ENCODE measurements at regions of chr9 and their contacts with region 1.

Region 1: DNA sequence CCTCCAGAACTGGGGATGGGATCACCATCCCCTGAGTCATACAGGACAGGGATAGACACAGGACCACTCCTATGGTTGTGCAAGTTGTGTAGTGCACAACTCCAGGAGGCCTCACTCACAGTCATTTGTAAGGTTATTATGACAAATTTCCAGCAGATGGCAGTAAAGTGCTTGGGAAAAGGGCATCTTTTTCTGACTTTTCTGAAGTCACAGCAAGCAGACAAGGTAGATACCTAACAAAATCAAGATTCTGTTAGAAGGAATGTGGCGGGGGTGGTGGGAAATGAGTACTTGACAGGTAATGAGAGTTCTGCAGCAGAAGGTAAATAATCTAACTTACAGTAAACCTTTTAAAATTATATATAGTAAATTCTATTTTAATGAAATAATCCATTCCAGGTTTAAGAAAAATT is 16.7 kb upstream of the KIF27 start:
- DNase-seq: no peak
- ATAC-seq: peak; percentile 45 to 48
- H3K4me3 ChIP-seq: no peak overlapping the region
- H3K27ac ChIP-seq: no peak overlapping the region
- H3K4me1 ChIP-seq: peaks cover 20 to 29% of the 10 kb centered on the region in 2 donors
- H3K27me3 ChIP-seq: no peaks in the 10 kb centered on the region
- CTCF ChIP-seq: peak; percentile 59 to 71 (median 68)
- POLR2A ChIP-seq: no peak

Region 2: DNA sequence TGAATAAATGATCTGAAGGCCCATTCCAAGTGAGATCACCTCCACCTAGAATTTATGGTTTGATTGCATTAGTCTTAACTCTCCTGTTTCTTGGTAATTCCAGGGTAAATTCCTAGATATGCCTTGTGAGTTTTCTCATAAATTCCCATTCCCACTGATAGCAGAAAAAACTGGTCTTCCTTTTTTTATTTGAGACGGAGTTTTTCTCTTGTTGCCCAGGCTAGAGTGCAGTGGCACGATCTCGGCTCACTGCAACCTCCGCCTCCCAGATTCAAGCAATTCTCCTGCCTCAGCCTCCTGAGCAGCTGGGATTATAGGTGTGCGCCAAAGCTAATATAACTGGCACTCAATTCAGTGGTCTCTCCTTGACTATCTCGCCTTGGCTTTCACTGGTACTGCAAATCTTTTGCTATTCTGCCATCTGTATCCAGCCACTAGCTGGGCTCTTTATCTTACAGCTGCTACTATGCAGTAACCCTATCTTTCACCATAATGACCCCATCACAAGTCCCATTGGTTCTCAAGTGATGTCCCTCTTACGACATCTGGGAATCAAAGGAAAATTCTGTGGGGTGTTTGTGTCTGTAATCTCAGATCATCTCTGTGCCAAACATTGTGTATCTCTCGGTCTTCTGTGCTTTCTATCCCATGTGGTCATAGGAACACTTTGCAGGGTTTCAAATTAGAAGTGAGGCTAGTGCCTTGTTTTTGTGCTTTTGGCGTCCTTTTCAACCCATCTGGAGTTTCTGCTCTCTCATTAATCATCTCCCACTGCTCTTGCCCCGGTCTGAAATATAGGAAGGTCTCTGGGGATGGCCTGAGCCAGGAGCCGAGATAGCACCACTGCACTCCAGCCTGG is 27.7 kb after region 1 on chr9:
- in situ Hi-C with region 1: no loop called
- intact Hi-C with region 1: no loop called
- DNase-seq: no peak
- ATAC-seq: peak; percentile 20 to 42
- H3K4me3 ChIP-seq: no peak overlapping the region
- H3K27ac ChIP-seq: peak overlapping the region in 2 of 4 donors; percentile 5 to 12
- H3K4me1 ChIP-seq: peaks cover 0 to 4% of the 10 kb centered on the region in 2 donors
- H3K27me3 ChIP-seq: no peaks in the 10 kb centered on the region
- CTCF ChIP-seq: no peak
- POLR2A ChIP-seq: no peak

Region 3: DNA sequence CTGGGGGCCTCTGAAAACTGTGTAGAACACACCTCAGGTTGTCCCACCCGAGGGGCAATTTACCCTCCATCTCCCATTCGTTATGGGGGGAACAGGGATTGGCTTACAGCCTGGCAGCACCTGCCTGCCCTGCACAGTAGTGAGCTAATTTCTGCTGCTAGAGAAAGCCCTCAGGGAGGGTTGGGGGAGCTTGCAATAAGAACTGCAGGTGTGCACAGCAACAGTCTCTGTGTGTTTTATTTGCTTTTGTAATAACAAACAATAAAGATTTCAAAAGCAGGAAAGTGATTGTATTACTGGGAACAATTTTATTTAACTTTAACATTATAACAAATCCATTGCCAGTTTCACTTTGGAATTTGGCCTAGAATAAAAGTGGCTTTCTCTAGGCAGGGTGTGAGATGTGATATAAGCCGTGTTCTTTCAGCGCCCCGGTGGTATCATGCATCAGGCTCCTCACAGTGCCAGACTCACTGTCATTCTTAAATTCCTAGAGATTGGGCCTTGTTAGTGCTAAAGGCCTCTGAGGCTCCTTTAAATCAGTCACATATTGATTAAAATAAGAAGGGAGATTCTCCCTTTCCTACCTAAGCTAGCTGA is 123.8 kb after region 1 on chr9:
- in situ Hi-C with region 1: no loop called
- intact Hi-C with region 1: loop called (anchors 10 kb)
- DNase-seq: no peak
- ATAC-seq: no peak
- H3K4me3 ChIP-seq: no peak overlapping the region
- H3K27ac ChIP-seq: peak overlapping the region; percentile 41 to 69 (median 61)
- H3K4me1 ChIP-seq: peaks cover 28 to 34% of the 10 kb centered on the region in 2 donors
- H3K27me3 ChIP-seq: no peaks in the 10 kb centered on the region
- CTCF ChIP-seq: no peak
- POLR2A ChIP-seq: no peak

Region 4: GRCh38 chr9:84170521-84171141 is 232.7 kb after region 1 on chr9:
- in situ Hi-C with region 1: loop called (anchors 5 to 10 kb)
- intact Hi-C with region 1: loop called (anchors 1 kb)
- DNase-seq: peak; percentile 82 to 90
- ATAC-seq: peak; percentile 77 to 78
- H3K4me3 ChIP-seq: no peak overlapping the region
- H3K27ac ChIP-seq: peak overlapping the region; percentile 65 to 75 (median 68)
- H3K4me1 ChIP-seq: peaks cover 18 to 20% of the 10 kb centered on the region in 2 donors
- H3K27me3 ChIP-seq: no peaks in the 10 kb centered on the region
- CTCF ChIP-seq: peak in 2 of 5 experiments; percentile 7 to 25
- POLR2A ChIP-seq: no peak

Region 5: DNA sequence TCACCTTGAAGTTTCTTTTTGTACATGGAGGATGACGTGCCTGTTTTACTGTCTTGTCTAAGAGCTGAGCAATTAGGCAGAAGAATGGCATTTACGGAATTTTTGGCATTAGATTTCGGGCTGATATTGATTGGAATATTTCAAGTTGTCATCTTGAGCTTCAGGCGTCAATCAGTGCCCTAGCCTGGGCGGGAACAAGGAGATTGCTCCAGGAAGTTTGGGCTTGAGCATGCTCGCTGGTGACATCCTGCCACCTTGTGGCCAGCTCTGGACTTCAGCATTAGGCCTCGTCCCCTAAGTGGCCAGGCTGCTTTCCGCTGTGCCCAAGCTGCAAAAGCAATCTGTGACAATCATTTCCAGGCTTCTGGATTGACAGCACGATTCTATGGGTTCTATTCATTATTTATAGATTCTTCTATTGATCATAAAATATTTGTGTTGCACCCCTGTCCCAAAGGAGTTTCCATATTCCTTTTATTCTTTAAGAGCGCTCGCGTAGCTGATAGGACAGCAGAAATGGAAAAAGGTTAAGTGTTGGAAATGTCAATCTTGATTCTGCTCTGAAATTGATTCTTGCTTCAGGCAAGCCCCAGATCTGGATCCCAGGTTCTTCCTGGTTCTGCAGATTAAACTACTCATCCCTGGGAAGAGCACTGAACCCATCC is 323.3 kb after region 1 on chr9:
- in situ Hi-C with region 1: loop called (anchors 5 kb)
- intact Hi-C with region 1: loop called (anchors 1 kb)
- DNase-seq: peak; percentile 59 to 70
- ATAC-seq: peak; percentile 92 to 97
- H3K4me3 ChIP-seq: peak overlapping the region; percentile 11 to 45 (median 26)
- H3K27ac ChIP-seq: no peak overlapping the region
- H3K4me1 ChIP-seq: no peaks in the 10 kb centered on the region
- H3K27me3 ChIP-seq: no peaks in the 10 kb centered on the region
- CTCF ChIP-seq: peak; percentile 83 to 95 (median 86)
- POLR2A ChIP-seq: no peak

Region 6: GRCh38 chr9:84315278-84315877 is 377.5 kb after region 1 on chr9:
- in situ Hi-C with region 1: loop called in 2 of 4 experiments (anchors 5 to 10 kb)
- intact Hi-C with region 1: loop called (anchors 2 kb)
- DNase-seq: peak in 1 of 2 donors; percentile 19
- ATAC-seq: peak in 1 of 2 donors; percentile 53
- H3K4me3 ChIP-seq: no peak overlapping the region
- H3K27ac ChIP-seq: no peak overlapping the region
- H3K4me1 ChIP-seq: peaks cover 0 to 3% of the 10 kb centered on the region in 2 donors
- H3K27me3 ChIP-seq: peaks cover 0 to 4% (median 0%) of the 10 kb centered on the region in 3 donors
- CTCF ChIP-seq: peak; percentile 40 to 77 (median 59)
- POLR2A ChIP-seq: no peak